ENCODE measurements at regions of chr5 and their contacts with region 1.

Region 1: GRCh38 chr5:3277590-3278196 is 317.9 kb upstream of the IRX1 start:
- DNase-seq: no peak
- H3K4me3 ChIP-seq: no peak overlapping the region
- H3K27ac ChIP-seq: no peak overlapping the region
- H3K4me1 ChIP-seq: no peaks in the 10 kb centered on the region
- H3K27me3 ChIP-seq: no peaks in the 10 kb centered on the region
- CTCF ChIP-seq: no peak
- POLR2A ChIP-seq: no peak

Region 2: GRCh38 chr5:2874099-2874498 is 403.6 kb before region 1 on chr5:
- intact Hi-C with region 1: loop called (anchors 5 kb)
- DNase-seq: no peak
- H3K4me3 ChIP-seq: no peak overlapping the region
- H3K27ac ChIP-seq: no peak overlapping the region
- H3K4me1 ChIP-seq: no peaks in the 10 kb centered on the region
- H3K27me3 ChIP-seq: no peaks in the 10 kb centered on the region
- CTCF ChIP-seq: no peak
- POLR2A ChIP-seq: no peak

Region 3: GRCh38 chr5:3650320-3650719 is 372.6 kb after region 1 on chr5:
- intact Hi-C with region 1: no loop called
- DNase-seq: no peak
- H3K4me3 ChIP-seq: no peak overlapping the region
- H3K27ac ChIP-seq: no peak overlapping the region
- H3K4me1 ChIP-seq: no peaks in the 10 kb centered on the region
- H3K27me3 ChIP-seq: no peaks in the 10 kb centered on the region
- CTCF ChIP-seq: no peak
- POLR2A ChIP-seq: no peak

Region 4: GRCh38 chr5:3715062-3715461 is 437.4 kb after region 1 on chr5:
- intact Hi-C with region 1: no loop called
- DNase-seq: no peak
- H3K4me3 ChIP-seq: no peak overlapping the region
- H3K27ac ChIP-seq: no peak overlapping the region
- H3K4me1 ChIP-seq: no peaks in the 10 kb centered on the region
- H3K27me3 ChIP-seq: no peaks in the 10 kb centered on the region
- CTCF ChIP-seq: no peak
- POLR2A ChIP-seq: no peak

Region 5: GRCh38 chr5:3789519-3790193 is 512.0 kb after region 1 on chr5:
- intact Hi-C with region 1: no loop called
- DNase-seq: no peak
- H3K4me3 ChIP-seq: no peak overlapping the region
- H3K27ac ChIP-seq: no peak overlapping the region
- H3K4me1 ChIP-seq: no peaks in the 10 kb centered on the region
- H3K27me3 ChIP-seq: no peaks in the 10 kb centered on the region
- CTCF ChIP-seq: no peak
- POLR2A ChIP-seq: no peak

Measured in thyroid gland (tissue), 4 donors.